ENCODE measurements at regions of chr12 and their contacts with region 1.

Region 1: DNA sequence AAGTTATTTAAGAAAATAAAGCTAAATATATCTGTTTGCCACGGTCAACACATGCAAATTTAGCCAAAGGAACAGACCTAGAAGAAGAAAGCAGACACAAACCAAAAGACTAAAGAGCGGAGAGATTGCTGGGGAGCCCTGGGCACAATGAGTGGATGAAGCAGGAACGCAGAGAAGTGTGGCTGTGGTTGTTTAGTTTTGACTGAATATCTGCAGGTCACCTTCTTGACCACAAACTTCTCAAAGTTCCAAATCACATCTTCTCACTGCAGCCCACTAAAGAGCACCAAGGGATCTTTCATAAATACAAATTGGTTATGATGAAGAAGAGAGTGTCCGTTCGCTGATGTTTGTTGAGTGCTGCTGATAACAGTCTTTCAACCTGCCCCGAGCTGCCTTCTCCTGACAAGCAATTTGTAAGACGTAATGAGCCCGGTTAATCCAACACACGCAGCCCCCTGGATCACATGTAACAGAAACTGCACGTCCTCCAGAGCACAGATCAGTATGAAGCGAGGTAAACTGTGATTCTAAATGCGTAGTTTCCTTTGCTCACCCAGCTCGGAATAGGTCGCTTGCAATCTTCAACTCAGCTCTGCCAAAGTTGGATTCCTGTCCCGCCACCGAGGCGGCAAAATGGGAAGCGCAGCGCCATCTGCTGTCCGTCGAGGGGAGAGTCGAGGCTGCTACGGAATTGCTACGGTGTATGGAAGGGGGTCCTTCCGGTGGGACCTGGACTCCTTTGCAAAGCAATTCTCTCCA is 120.8 kb downstream of the GXYLT1 start:
- DNase-seq: peak; percentile 67 to 81
- ATAC-seq: peak; percentile 72 to 92 (median 89)
- H3K4me3 ChIP-seq: peak overlapping the region in 8 of 10 donors; percentile 9 to 59 (median 48)
- H3K27ac ChIP-seq: no peak overlapping the region
- H3K4me1 ChIP-seq: peaks cover 0 to 17% (median 4%) of the 10 kb centered on the region in 9 donors
- H3K27me3 ChIP-seq: no peaks in the 10 kb centered on the region
- CTCF ChIP-seq: peak; percentile 81 to 97 (median 95)

Region 2: GRCh38 chr12:40946612-40947194 is 1077.2 kb before region 1 on chr12:
- intact Hi-C with region 1: loop called in 4 of 10 experiments (anchors 5 kb)
- DNase-seq: no peak
- ATAC-seq: no peak
- H3K4me3 ChIP-seq: no peak overlapping the region
- H3K27ac ChIP-seq: no peak overlapping the region
- H3K4me1 ChIP-seq: no peaks in the 10 kb centered on the region
- H3K27me3 ChIP-seq: no peaks in the 10 kb centered on the region
- CTCF ChIP-seq: peak; percentile 29 to 74 (median 65)

Region 3: GRCh38 chr12:41277116-41277945 is 746.6 kb before region 1 on chr12:
- intact Hi-C with region 1: loop called (anchors 2 to 10 kb)
- DNase-seq: no peak
- ATAC-seq: peak in 1 of 8 donors; percentile 51
- H3K4me3 ChIP-seq: no peak overlapping the region
- H3K27ac ChIP-seq: no peak overlapping the region
- H3K4me1 ChIP-seq: peaks cover 0 to 8% (median 0%) of the 10 kb centered on the region in 9 donors
- H3K27me3 ChIP-seq: no peaks in the 10 kb centered on the region
- CTCF ChIP-seq: peak; percentile 22 to 76 (median 68)

Region 4: GRCh38 chr12:41684997-41685396 is 338.9 kb before region 1 on chr12:
- intact Hi-C with region 1: loop called in 4 of 10 experiments (anchors 2 to 10 kb)
- DNase-seq: no peak
- ATAC-seq: no peak
- H3K4me3 ChIP-seq: no peak overlapping the region
- H3K27ac ChIP-seq: no peak overlapping the region
- H3K4me1 ChIP-seq: no peaks in the 10 kb centered on the region
- H3K27me3 ChIP-seq: no peaks in the 10 kb centered on the region
- CTCF ChIP-seq: peak in 2 of 9 donors; percentile 43 to 59

Region 5: GRCh38 chr12:41932470-41932991 is 91.4 kb before region 1 on chr12:
- intact Hi-C with region 1: loop called in 3 of 10 experiments (anchors 5 to 10 kb)
- DNase-seq: peak; percentile 71 to 84
- ATAC-seq: peak; percentile 89 to 97 (median 96)
- H3K4me3 ChIP-seq: peak overlapping the region; percentile 8 to 64 (median 60)
- H3K27ac ChIP-seq: peak overlapping the region in 8 of 10 donors; percentile 50 to 76 (median 70)
- H3K4me1 ChIP-seq: peaks cover 0 to 28% (median 0%) of the 10 kb centered on the region in 9 donors
- H3K27me3 ChIP-seq: no peaks in the 10 kb centered on the region
- CTCF ChIP-seq: peak in 3 of 9 donors; percentile 18 to 31 (median 25)

Region 6: DNA sequence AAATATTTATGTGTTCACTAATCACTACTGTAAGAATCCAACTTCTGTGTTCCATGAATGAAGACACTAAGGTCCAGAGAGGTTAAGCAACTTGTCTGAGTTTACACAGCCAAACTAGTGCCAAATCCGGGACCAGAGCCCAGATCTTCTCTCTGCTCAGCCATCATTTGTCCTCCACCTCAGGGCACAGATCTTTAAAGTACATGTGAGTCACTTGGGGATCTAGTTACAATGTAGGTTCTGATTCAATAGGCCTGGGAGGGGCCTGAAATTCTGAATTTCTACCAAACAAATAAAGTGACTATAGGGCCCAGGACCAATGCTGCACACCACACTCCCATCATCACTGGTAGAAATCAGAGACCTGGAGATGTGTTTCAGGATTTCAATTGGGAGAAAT is 42.2 kb before region 1 on chr12:
- intact Hi-C with region 1: no loop called
- DNase-seq: no peak
- ATAC-seq: no peak
- H3K4me3 ChIP-seq: no peak overlapping the region
- H3K27ac ChIP-seq: no peak overlapping the region
- H3K4me1 ChIP-seq: no peaks in the 10 kb centered on the region
- H3K27me3 ChIP-seq: peaks cover 0 to 3% (median 0%) of the 10 kb centered on the region in 7 donors
- CTCF ChIP-seq: no peak

Region 7: GRCh38 chr12:41992022-41992421 is 31.9 kb before region 1 on chr12:
- intact Hi-C with region 1: no loop called
- DNase-seq: no peak
- ATAC-seq: no peak
- H3K4me3 ChIP-seq: no peak overlapping the region
- H3K27ac ChIP-seq: no peak overlapping the region
- H3K4me1 ChIP-seq: no peaks in the 10 kb centered on the region
- H3K27me3 ChIP-seq: no peaks in the 10 kb centered on the region
- CTCF ChIP-seq: no peak

Region 8: GRCh38 chr12:42356344-42356743 is 332.4 kb after region 1 on chr12:
- intact Hi-C with region 1: no loop called
- DNase-seq: no peak
- ATAC-seq: peak in 5 of 8 donors; percentile 48 to 96 (median 65)
- H3K4me3 ChIP-seq: no peak overlapping the region
- H3K27ac ChIP-seq: peak overlapping the region in 8 of 10 donors; percentile 5 to 78 (median 42)
- H3K4me1 ChIP-seq: peaks cover 0 to 14% (median 3%) of the 10 kb centered on the region in 9 donors
- H3K27me3 ChIP-seq: no peaks in the 10 kb centered on the region
- CTCF ChIP-seq: no peak

Measured in heart right ventricle (tissue), 16 donors.